MCF 10A (cell line): ENCODE measurements at regions of chr11 and their contacts with region 1.

Region 1: DNA sequence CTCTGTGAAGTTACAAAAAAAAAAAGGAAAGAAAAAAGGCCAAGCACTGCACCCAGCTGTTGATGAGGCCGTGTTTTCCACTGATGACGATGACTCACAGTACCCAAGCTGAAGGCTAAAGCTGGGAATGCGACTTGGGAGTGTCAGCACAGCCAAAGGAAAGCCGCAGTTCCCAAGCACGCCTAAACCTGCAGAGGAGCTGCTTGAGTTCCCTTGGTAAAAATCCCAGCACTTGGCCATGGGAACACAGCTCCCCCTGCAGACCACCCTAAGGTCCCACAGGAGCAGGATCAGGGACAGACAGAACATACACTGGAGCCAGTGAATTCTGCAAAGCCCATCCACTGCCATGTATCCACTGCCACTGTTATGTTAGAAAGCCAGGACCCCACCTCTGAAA is 39.9 kb downstream of the SERGEF start:
- DNase-seq: peak; percentile 88
- H3K4me3 Mint-ChIP-seq: no peak overlapping the region
- H3K27ac Mint-ChIP-seq: no peak overlapping the region
- H3K4me1 Mint-ChIP-seq: peaks cover 9% of the 10 kb centered on the region
- H3K27me3 Mint-ChIP-seq: no peaks in the 10 kb centered on the region
- CTCF ChIP-seq: peak; percentile 48

Region 2: DNA sequence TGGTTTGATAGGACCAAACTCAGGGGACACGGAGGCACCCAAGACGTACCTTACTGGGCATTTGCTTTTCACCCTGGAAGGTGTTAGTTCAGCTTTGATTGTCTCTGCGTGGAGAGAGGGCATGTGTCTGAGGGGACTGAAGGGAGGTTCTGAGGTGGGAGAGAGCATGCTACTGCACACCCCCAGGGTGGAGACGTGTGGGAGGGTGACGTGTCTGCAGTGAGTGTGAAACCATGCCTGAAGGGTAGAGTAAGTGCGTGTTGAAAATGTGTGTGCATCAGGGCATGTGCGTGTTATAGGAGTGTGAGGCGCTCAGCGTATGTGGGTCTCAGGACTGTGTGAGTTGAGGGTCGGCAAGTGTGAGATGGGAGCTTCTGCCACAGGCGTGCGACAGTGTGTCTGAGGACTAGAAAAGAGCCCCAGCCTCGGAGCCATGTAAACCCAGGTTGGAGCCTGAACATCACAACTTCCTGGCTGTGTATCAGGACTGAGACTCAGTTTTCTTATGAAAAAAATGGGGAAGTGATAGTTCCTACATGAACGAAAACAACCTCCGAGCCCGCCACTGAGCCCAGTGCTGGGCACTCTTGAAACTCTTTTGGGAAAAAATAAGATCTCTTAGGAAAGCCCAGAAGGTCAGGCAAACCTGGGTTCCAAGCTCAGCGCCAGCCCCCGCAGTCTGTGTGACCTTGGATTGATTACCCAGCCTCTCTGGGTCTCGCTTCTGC is 572.8 kb before region 1 on chr11:
- CTCF ChIA-PET with region 1: no interaction called
- POLR2A ChIA-PET with region 1: no interaction called
- intact Hi-C with region 1: no loop called
- DNase-seq: no peak
- H3K4me3 Mint-ChIP-seq: no peak overlapping the region
- H3K27ac Mint-ChIP-seq: no peak overlapping the region
- H3K4me1 Mint-ChIP-seq: no peaks in the 10 kb centered on the region
- H3K27me3 Mint-ChIP-seq: peaks cover 18% of the 10 kb centered on the region
- CTCF ChIP-seq: no peak

Region 3: DNA sequence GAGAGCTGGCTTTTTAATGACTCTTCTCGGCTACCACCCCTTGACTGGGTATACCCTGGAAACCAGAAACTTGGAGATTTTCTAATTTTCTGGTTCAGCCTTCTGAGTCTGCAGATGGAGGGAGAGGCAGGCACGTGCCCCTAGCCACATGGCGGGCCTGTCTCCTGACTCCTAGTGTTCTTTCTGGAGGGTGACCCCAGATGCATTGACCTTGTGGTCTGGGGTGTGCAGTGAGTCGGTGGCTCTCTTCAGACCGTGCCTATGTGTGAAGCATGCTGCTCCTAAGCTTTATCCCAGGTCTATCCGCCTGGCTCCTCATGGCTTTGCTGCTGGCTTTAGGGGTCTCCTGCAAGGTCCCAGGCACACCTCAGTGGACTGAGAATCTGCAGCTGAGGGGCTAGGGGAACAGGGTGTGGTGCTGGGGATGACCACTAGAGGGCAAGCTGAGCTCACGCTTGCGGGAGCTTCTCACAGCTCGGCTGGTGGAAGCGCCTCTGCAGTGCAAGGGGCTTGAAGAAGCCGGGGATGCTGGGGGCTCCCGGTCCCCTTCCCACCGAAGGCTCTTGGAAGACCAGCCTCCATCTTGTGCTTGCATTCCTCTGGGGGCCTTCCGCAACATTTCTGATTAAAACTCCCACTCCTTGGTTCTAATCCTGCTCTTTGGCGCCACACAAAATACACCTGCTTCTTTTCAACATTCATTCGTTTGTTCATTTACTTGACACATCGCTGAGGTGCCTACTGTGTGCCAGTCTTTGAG is 374.1 kb before region 1 on chr11:
- CTCF ChIA-PET with region 1: interaction called, 47 read pairs
- POLR2A ChIA-PET with region 1: interaction called, 3 read pairs
- intact Hi-C with region 1: loop called (anchors 1 kb)
- DNase-seq: peak; percentile 62
- H3K4me3 Mint-ChIP-seq: no peak overlapping the region
- H3K27ac Mint-ChIP-seq: no peak overlapping the region
- H3K4me1 Mint-ChIP-seq: no peaks in the 10 kb centered on the region
- H3K27me3 Mint-ChIP-seq: peaks cover 21% of the 10 kb centered on the region
- CTCF ChIP-seq: peak; percentile 89

Region 4: GRCh38 chr11:17760102-17761029 is 212.6 kb before region 1 on chr11:
- CTCF ChIA-PET with region 1: interaction called, 23 read pairs
- POLR2A ChIA-PET with region 1: no interaction called
- intact Hi-C with region 1: loop called (anchors 1 kb)
- DNase-seq: peak; percentile 62
- H3K4me3 Mint-ChIP-seq: no peak overlapping the region
- H3K27ac Mint-ChIP-seq: no peak overlapping the region
- H3K4me1 Mint-ChIP-seq: no peaks in the 10 kb centered on the region
- H3K27me3 Mint-ChIP-seq: peaks cover 40% of the 10 kb centered on the region
- CTCF ChIP-seq: peak; percentile 41

Region 5: GRCh38 chr11:18608376-18608775 is 635.4 kb after region 1 on chr11:
- CTCF ChIA-PET with region 1: no interaction called
- POLR2A ChIA-PET with region 1: no interaction called
- intact Hi-C with region 1: no loop called
- DNase-seq: no peak
- H3K4me3 Mint-ChIP-seq: no peak overlapping the region
- H3K27ac Mint-ChIP-seq: no peak overlapping the region
- H3K4me1 Mint-ChIP-seq: no peaks in the 10 kb centered on the region
- H3K27me3 Mint-ChIP-seq: no peaks in the 10 kb centered on the region
- CTCF ChIP-seq: no peak